ENCODE measurements at regions of chr1 and their contacts with region 1.

Region 1: DNA sequence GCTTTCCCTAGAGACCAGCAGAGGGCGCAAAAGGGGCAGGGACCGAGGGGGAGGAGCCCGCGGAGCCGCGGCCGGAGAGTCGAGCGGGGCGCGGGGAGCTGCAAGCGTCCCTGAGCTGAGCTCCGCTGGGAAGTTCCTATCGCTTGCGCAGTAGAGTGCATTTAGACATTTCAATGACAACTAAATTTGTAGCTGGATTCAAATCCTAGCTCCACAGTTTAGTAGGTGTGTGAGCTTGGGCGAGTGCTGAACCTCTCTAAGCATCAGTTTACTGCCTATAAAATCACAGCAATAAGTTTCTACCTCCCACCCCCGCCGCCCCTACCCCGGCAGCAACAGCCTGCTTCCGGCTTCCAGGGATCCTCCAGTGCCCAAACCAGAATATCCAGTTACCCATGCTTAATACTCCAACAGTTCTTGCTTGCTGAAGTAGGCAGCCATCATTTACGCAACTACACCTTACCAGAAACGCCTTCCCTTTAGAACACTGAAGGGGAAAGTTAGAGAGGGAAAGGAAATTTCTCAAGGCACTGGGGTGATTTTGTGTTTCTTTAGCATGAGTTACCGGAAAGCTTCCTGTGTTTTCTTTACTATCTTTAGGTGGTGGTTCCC is 9.1 kb downstream of the TLR5 start:
- DNase-seq: peak; percentile 69 to 90
- ATAC-seq: peak; percentile 90 to 94 (median 91)
- H3K4me3 ChIP-seq: no peak overlapping the region
- H3K4me3 Mint-ChIP-seq: peak overlapping the region; percentile 37
- H3K27ac ChIP-seq: no peak overlapping the region
- H3K27ac Mint-ChIP-seq: no peak overlapping the region
- H3K4me1 ChIP-seq: peaks cover 16% of the 10 kb centered on the region
- H3K4me1 Mint-ChIP-seq: peaks cover 13 to 16% of the 10 kb centered on the region in 2 donors
- H3K27me3 ChIP-seq: peaks cover 15% of the 10 kb centered on the region
- H3K27me3 Mint-ChIP-seq: peaks cover 44 to 63% of the 10 kb centered on the region in 2 donors
- CTCF ChIP-seq: peak; percentile 97

Region 2: DNA sequence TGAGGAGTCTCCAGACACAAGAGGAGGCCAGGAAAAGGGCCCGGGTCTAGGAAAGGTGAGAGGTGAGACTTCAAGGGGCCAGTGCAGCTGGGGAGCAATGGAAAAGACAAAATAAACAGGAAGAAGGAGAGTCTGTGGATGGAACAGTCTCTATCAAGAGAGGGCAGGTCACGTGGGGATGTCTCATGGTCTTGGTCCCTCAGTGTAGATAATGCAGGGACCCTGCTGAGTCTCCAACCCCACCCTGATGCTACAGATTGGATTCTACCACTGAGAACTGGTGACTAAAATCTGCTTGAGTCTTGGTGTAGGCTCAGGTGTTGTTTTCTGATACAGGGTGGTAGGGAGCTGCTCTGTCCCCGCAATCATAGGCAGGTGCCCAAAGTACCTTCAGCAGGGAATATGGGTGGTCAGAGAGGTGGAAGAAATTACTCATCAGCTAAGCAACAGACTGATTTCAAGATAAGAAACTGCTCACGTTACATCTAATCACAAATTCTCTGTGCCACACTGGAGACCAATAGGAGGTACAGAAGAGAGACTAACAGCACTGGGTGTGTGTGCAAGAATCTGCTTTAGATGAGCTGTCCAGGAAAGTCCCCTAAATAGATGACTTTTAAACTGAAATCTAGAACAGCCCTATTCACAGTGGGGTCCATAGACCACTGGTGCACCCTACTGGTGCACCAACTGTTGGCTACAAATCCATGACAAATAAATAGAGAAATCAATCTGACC is 110.6 kb after region 1 on chr1:
- intact Hi-C with region 1: loop called (anchors 1 kb)
- DNase-seq: peak in 1 of 2 donors; percentile 64
- ATAC-seq: peak; percentile 71 to 86 (median 74)
- H3K4me3 ChIP-seq: no peak overlapping the region
- H3K4me3 Mint-ChIP-seq: no peak overlapping the region
- H3K27ac ChIP-seq: no peak overlapping the region
- H3K27ac Mint-ChIP-seq: peak overlapping the region in 1 of 2 donors; percentile 1
- H3K4me1 ChIP-seq: peaks cover 13% of the 10 kb centered on the region
- H3K4me1 Mint-ChIP-seq: peaks cover 6 to 10% of the 10 kb centered on the region in 2 donors
- H3K27me3 ChIP-seq: no peaks in the 10 kb centered on the region
- H3K27me3 Mint-ChIP-seq: peaks cover 25 to 29% of the 10 kb centered on the region in 2 donors
- CTCF ChIP-seq: no peak

Region 3: DNA sequence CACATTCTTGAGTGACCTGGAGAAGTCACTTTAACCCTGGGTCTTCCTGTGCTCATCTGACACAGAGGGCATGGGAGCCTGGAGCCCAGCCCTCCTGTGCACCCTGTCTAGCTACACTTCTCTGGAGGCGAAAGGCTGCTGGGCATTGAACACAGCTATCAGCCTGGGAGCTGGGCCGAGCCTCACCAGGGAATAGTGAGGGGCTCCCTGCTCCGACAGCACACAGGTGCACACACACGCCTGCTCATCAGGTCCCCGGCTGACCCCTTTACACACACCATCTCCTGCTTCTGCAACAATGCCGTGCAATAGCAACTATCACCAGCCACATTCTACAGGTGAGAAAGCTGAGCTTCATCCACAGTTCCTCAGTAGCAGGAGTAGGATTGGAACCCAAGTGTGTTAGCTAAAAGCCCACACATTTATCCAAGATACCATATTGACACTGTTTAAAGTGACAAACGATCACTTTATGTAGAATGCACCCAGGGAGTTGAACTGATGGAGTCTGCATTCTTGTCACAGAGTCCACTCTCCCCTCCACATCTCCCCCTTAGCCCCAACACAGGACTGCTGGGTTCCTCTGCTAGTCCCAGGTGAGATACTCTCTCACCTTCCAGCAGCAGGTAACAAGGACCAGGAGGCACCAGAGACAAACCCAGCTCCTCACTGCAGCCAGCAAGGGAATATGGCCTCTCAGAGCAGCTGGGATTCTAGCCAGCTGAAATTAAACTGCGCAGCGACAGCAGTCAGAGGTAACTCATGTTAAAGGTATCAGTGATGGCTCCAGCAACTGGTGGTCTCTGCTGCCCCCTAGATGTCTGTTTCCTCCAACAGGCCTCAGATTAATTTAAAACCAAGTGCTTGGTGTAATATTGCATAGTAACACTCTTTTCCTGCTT is 549.9 kb after region 1 on chr1:
- intact Hi-C with region 1: loop called (anchors 1 kb)
- DNase-seq: peak in 1 of 2 donors; percentile 79
- ATAC-seq: peak in 2 of 3 donors; percentile 31 to 55
- H3K4me3 ChIP-seq: no peak overlapping the region
- H3K4me3 Mint-ChIP-seq: no peak overlapping the region
- H3K27ac ChIP-seq: no peak overlapping the region
- H3K27ac Mint-ChIP-seq: no peak overlapping the region
- H3K4me1 ChIP-seq: no peaks in the 10 kb centered on the region
- H3K4me1 Mint-ChIP-seq: no peaks in the 10 kb centered on the region
- H3K27me3 ChIP-seq: no peaks in the 10 kb centered on the region
- H3K27me3 Mint-ChIP-seq: peaks cover 0 to 8% of the 10 kb centered on the region in 2 donors
- CTCF ChIP-seq: peak; percentile 32

Measured in natural killer cell (primary cell).